B cell (primary cell): ENCODE measurements at regions of chr20 and their contacts with region 1.

Region 1: DNA sequence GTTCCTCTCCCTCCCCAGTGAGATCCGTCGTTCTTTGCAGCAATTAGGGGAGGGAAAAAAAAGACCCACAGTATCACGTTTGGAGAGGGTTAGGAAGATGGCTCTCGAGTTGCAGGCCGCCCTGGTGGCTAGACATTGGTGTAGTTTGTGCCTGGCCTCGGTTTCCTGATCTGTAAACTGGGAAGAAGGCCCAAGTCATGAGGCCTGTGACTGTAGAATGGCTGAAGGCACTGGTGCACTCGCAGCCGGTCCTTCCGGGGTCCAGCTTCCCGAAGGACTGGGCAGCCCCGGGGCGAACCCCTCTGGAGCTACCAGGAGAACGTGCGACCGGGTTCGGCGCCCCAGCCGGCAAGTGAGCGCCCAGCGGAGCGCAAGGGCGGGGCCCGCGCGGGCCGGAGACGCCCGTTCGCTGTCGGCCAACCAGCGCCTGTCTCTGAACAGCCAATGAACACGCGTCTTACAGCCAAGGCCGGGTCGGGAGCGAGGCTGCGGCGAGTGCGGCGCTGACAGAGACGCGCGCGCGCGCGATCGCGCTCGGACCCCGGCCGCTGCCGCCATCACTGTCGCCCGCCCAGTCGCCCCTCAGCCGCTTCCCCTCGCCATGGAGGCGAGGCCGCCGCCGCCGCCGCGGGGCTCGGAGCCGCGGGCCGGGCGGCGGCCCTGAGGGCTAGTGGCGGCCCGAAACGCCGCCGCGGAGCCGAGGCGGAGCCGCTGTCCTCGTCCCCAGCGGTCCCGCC is at the start of gene PTPRA:
- DNase-seq: peak; percentile 92
- ATAC-seq: peak; percentile 94
- H3K4me3 ChIP-seq: peak within 1 kb of the TSS; percentile 77 to 85 (median 79)
- H3K4me3 Mint-ChIP-seq: peak within 1 kb of the TSS; percentile 92
- H3K27ac ChIP-seq: peak within 1 kb of the TSS; percentile 25 to 32
- H3K27ac Mint-ChIP-seq: peak within 1 kb of the TSS; percentile 84
- H3K4me1 ChIP-seq: peaks cover 27 to 31% of the 10 kb centered on the region in 2 donors
- H3K4me1 Mint-ChIP-seq: peaks cover 33% of the 10 kb centered on the region
- H3K27me3 ChIP-seq: peaks cover 0 to 11% (median 0%) of the 10 kb centered on the region in 4 experiments
- H3K27me3 Mint-ChIP-seq: peaks cover 8% of the 10 kb centered on the region
- CTCF ChIP-seq: no peak
- total RNA-seq, gene PTPRA: 64.2 and 70.0 TPM in 2 replicates

Region 2: DNA sequence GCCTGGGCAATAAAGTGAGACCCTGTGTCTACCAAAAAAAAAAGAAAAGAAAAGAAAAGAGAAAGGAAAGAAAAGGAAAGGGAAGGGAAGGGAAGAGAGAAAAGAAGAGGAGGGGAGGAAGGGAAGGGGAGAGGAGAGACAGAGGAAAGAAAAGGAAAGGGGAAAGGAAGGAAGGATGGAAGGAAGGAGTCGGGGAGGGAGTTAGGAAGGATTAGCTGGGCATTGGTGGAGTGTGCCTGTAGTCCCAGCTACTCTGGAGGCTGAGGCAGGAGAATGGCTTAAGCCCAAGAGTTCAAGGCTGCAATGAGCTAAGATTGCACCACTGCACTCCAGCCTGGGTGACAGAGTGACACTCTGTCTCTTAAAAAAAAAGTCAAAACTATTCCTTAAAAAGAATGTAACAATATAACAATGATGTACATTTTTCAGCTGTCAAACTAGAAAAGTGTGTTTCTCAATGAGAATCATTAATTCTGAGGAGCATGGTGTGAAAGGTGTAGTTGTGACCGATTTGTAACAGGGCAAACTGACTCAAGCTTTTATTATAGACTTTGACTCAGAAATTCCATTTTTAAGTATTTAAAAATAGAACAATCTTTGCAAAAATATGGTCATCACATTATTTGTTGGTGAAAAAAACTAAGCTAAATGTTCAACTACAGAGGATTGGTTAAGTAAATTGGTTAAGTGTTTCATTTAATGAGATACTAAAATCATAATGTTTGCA is 417.2 kb before region 1 on chr20:
- CTCF ChIA-PET with region 1: no interaction called
- POLR2A ChIA-PET with region 1: no interaction called
- intact Hi-C with region 1: no loop called
- DNase-seq: no peak
- ATAC-seq: no peak
- H3K4me3 ChIP-seq: no peak overlapping the region
- H3K4me3 Mint-ChIP-seq: no peak overlapping the region
- H3K27ac ChIP-seq: no peak overlapping the region
- H3K27ac Mint-ChIP-seq: no peak overlapping the region
- H3K4me1 ChIP-seq: no peaks in the 10 kb centered on the region
- H3K4me1 Mint-ChIP-seq: no peaks in the 10 kb centered on the region
- H3K27me3 ChIP-seq: no peaks in the 10 kb centered on the region
- H3K27me3 Mint-ChIP-seq: no peaks in the 10 kb centered on the region
- CTCF ChIP-seq: peak; percentile 6

Region 3: GRCh38 chr20:2795451-2795850 is 77.7 kb before region 1 on chr20:
- CTCF ChIA-PET with region 1: no interaction called
- POLR2A ChIA-PET with region 1: no interaction called
- intact Hi-C with region 1: no loop called
- DNase-seq: no peak
- ATAC-seq: no peak
- H3K4me3 ChIP-seq: no peak overlapping the region
- H3K4me3 Mint-ChIP-seq: no peak overlapping the region
- H3K27ac ChIP-seq: no peak overlapping the region
- H3K27ac Mint-ChIP-seq: no peak overlapping the region
- H3K4me1 ChIP-seq: peaks cover 12 to 17% of the 10 kb centered on the region in 2 donors
- H3K4me1 Mint-ChIP-seq: peaks cover 20% of the 10 kb centered on the region
- H3K27me3 ChIP-seq: peaks cover 0 to 33% (median 2%) of the 10 kb centered on the region in 4 experiments
- H3K27me3 Mint-ChIP-seq: peaks cover 41% of the 10 kb centered on the region
- CTCF ChIP-seq: no peak

Region 4: GRCh38 chr20:2840138-2840966 is 32.8 kb before region 1 on chr20 and contains the starts of genes PCED1A and VPS16:
- CTCF ChIA-PET with region 1: interaction called, 7 read pairs
- POLR2A ChIA-PET with region 1: interaction called, 7 read pairs
- intact Hi-C with region 1: loop called (anchors 1 kb)
- DNase-seq: peak; percentile 92
- ATAC-seq: peak; percentile 93
- H3K4me3 ChIP-seq: peak within 1 kb of the TSS; percentile 63 to 90 (median 80)
- H3K4me3 Mint-ChIP-seq: peak within 1 kb of the TSS; percentile 91
- H3K27ac ChIP-seq: peak within 1 kb of the TSS; percentile 78 to 85
- H3K27ac Mint-ChIP-seq: peak within 1 kb of the TSS; percentile 91
- H3K4me1 ChIP-seq: peaks cover 16 to 27% of the 10 kb centered on the region in 2 donors
- H3K4me1 Mint-ChIP-seq: peaks cover 22% of the 10 kb centered on the region
- H3K27me3 ChIP-seq: no peaks in the 10 kb centered on the region
- H3K27me3 Mint-ChIP-seq: no peaks in the 10 kb centered on the region
- CTCF ChIP-seq: no peak
- total RNA-seq, gene PCED1A: 83.5 and 96.8 TPM in 2 replicates
- total RNA-seq, gene VPS16: 59.5 and 63.0 TPM in 2 replicates

Region 5: GRCh38 chr20:2946988-2947961 is 74.1 kb after region 1 on chr20:
- CTCF ChIA-PET with region 1: no interaction called
- POLR2A ChIA-PET with region 1: no interaction called
- intact Hi-C with region 1: no loop called
- DNase-seq: no peak
- ATAC-seq: no peak
- H3K4me3 ChIP-seq: no peak overlapping the region
- H3K4me3 Mint-ChIP-seq: no peak overlapping the region
- H3K27ac ChIP-seq: no peak overlapping the region
- H3K27ac Mint-ChIP-seq: no peak overlapping the region
- H3K4me1 ChIP-seq: no peaks in the 10 kb centered on the region
- H3K4me1 Mint-ChIP-seq: no peaks in the 10 kb centered on the region
- H3K27me3 ChIP-seq: no peaks in the 10 kb centered on the region
- H3K27me3 Mint-ChIP-seq: no peaks in the 10 kb centered on the region
- CTCF ChIP-seq: no peak

Region 6: GRCh38 chr20:2984956-2985661 is 111.9 kb after region 1 on chr20:
- CTCF ChIA-PET with region 1: no interaction called
- POLR2A ChIA-PET with region 1: no interaction called
- intact Hi-C with region 1: loop called (anchors 10 kb)
- DNase-seq: no peak
- ATAC-seq: no peak
- H3K4me3 ChIP-seq: no peak overlapping the region
- H3K4me3 Mint-ChIP-seq: no peak overlapping the region
- H3K27ac ChIP-seq: no peak overlapping the region
- H3K27ac Mint-ChIP-seq: no peak overlapping the region
- H3K4me1 ChIP-seq: peaks cover 19 to 24% of the 10 kb centered on the region in 2 donors
- H3K4me1 Mint-ChIP-seq: peaks cover 2% of the 10 kb centered on the region
- H3K27me3 ChIP-seq: no peaks in the 10 kb centered on the region
- H3K27me3 Mint-ChIP-seq: no peaks in the 10 kb centered on the region
- CTCF ChIP-seq: no peak

Region 7: GRCh38 chr20:3854462-3854871 is 981.3 kb after region 1 on chr20:
- CTCF ChIA-PET with region 1: no interaction called
- POLR2A ChIA-PET with region 1: no interaction called
- intact Hi-C with region 1: no loop called
- DNase-seq: no peak
- ATAC-seq: no peak
- H3K4me3 ChIP-seq: no peak overlapping the region
- H3K4me3 Mint-ChIP-seq: no peak overlapping the region
- H3K27ac ChIP-seq: no peak overlapping the region
- H3K27ac Mint-ChIP-seq: peak overlapping the region; percentile 26
- H3K4me1 ChIP-seq: no peaks in the 10 kb centered on the region
- H3K4me1 Mint-ChIP-seq: peaks cover 6% of the 10 kb centered on the region
- H3K27me3 ChIP-seq: no peaks in the 10 kb centered on the region
- H3K27me3 Mint-ChIP-seq: no peaks in the 10 kb centered on the region
- CTCF ChIP-seq: no peak